MCF 10A (cell line): ENCODE measurements at regions of chr10 and their contacts with region 1.

Region 1: GRCh38 chr10:86521678-86522509 is at the start of gene WAPL:
- DNase-seq: peak; percentile 91
- H3K4me3 Mint-ChIP-seq: peak within 1 kb of the TSS; percentile 98
- H3K27ac Mint-ChIP-seq: peak within 1 kb of the TSS; percentile 93
- H3K4me1 Mint-ChIP-seq: peaks cover 42% of the 10 kb centered on the region
- H3K27me3 Mint-ChIP-seq: no peaks in the 10 kb centered on the region
- CTCF ChIP-seq: no peak
- total RNA-seq, gene WAPL: 42.7 and 45.2 TPM in 2 replicates

Region 2: DNA sequence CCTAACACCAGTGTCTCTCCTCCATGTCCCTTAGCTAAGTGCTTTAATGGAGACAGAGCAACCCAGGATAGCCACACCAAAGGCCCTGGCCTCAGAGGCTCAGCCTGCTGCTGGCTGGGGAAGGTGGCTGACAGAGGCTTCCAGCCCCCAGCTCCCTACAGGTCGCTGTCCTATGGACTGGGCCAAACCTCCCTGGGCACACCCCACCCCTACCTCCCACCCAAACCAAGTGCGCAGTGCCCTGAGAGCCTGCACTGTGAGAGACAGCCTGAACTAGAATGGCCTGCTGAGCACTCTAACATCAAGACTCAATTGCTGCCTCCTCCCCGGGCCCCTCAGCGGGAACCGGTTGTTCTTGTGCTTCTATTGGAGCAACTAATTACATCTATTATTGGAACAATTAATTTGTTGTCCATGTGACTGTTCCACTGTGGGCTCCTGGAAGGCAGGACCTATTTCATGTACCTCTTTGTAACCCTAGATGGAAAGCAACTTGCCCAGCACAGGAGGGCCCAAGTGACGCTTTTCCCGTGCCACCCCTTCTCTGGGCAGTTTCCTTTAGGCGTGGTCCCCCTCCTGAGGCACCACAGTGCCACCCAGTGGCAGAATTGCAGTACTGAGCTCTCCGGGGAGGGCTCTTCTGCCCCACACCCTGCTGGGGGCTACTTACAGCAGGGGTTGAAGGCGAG is 63.3 kb after region 1 on chr10:
- CTCF ChIA-PET with region 1: interaction called, 7 read pairs
- POLR2A ChIA-PET with region 1: interaction called, 3 read pairs
- intact Hi-C with region 1: loop called (anchors 1 kb)
- DNase-seq: peak; percentile 74
- H3K4me3 Mint-ChIP-seq: no peak overlapping the region
- H3K27ac Mint-ChIP-seq: no peak overlapping the region
- H3K4me1 Mint-ChIP-seq: no peaks in the 10 kb centered on the region
- H3K27me3 Mint-ChIP-seq: no peaks in the 10 kb centered on the region
- CTCF ChIP-seq: peak; percentile 91

Region 3: DNA sequence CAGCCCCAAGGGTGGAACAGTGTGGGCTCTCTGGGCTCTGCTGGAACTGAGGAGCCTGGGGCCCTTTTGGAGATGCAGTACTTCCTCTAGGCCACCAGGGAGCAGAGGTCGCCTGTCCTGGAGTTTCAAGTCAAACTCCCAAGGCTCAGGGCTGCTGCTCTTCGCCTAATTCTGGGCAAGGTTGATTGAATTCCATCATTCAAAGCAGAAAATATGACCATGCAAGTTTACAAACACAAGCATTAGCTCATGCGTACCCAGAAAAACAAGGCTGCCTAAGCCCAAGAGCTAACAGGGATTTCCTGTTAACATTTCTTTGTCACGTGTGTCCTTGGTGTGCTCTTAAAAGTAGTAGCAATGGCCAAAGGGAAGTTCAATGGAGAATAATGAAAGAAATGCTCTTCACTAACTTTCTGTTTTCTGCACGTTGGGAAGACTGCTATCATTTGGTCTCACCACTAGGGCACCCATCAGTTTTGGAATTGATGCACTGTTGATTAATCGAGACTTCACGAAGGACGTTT is 166.6 kb after region 1 on chr10:
- CTCF ChIA-PET with region 1: no interaction called
- POLR2A ChIA-PET with region 1: no interaction called
- intact Hi-C with region 1: loop called (anchors 2 kb)
- DNase-seq: peak; percentile 67
- H3K4me3 Mint-ChIP-seq: no peak overlapping the region
- H3K27ac Mint-ChIP-seq: no peak overlapping the region
- H3K4me1 Mint-ChIP-seq: no peaks in the 10 kb centered on the region
- H3K27me3 Mint-ChIP-seq: peaks cover 15% of the 10 kb centered on the region
- CTCF ChIP-seq: peak; percentile 76